ENCODE measurements at regions of chr2 and their contacts with region 1.

Region 1: GRCh38 chr2:54773838-54774237 is 50.4 kb downstream of the EML6 start:
- H3K4me3 ChIP-seq: no peak overlapping the region
- H3K27ac ChIP-seq: no peak overlapping the region
- H3K4me1 ChIP-seq: no peaks in the 10 kb centered on the region
- CTCF ChIP-seq: no peak

Region 2: DNA sequence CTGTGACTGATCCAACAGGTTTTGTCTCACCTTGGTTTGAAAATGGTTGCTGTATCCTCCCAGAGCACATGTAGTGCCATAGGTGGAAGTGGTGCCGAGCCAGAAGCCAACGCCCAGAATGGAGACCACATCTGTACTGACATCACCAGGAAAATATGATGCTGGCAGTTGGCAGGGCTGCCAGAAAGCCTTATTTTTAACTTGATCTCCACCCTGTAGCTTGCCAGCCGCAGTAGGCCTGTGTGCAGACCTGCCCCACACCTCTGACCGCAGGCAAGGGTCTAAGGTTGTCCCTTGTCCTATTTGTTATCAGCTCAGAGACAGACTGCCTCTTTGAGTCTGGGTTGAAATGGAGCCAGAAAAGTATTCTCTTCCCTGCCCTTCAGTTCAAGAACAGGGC is 173.9 kb before region 1 on chr2:
- CTCF ChIA-PET with region 1: no interaction called
- POLR2A ChIA-PET with region 1: no interaction called
- H3K4me3 ChIP-seq: no peak overlapping the region
- H3K27ac ChIP-seq: no peak overlapping the region
- H3K4me1 ChIP-seq: no peaks in the 10 kb centered on the region
- CTCF ChIP-seq: no peak

Region 3: GRCh38 chr2:54763636-54764291 is 10.1 kb before region 1 on chr2:
- CTCF ChIA-PET with region 1: interaction called, 11 read pairs
- POLR2A ChIA-PET with region 1: no interaction called
- H3K4me3 ChIP-seq: no peak overlapping the region
- H3K27ac ChIP-seq: no peak overlapping the region
- H3K4me1 ChIP-seq: no peaks in the 10 kb centered on the region
- CTCF ChIP-seq: 0 out of 2 replicates have a peak, but pooled peaks have one; percentile 32

Region 4: DNA sequence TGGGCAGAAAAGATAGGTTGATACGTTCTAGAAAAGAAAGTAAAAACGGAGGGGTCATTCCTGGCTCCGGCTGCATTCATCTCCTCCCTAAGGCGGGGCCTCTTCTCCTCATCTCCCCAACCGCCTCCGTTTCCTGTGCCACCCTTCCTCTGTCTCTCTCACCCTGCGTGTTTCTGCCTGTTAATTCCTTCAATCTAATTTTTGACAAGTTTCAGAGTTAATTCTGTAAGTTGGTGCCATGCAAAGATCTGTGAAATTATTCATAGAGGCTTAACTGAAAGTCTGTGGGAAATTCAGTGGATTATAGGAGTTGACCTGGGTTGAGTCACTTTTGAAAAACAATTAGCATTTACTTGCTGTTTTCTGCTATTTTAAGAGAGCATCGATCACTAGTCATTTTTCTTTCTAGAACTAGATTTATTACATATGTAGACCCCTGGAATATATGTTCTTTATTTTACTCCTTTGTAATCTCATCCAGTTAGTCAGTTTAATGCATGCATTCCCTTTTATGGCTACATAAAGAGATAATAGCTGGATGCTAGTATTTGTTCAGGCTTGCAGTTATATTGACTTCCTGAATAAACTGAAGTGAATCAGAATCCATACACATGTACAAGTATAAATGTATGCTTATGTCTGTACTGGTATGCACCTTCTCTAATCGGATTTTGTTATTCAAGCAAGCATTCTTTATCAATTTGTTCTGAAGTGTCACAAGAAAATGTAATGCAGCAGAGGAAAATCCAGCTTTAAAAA is 40.7 kb after region 1 on chr2:
- CTCF ChIA-PET with region 1: no interaction called
- POLR2A ChIA-PET with region 1: no interaction called
- H3K4me3 ChIP-seq: no peak overlapping the region
- H3K27ac ChIP-seq: no peak overlapping the region
- H3K4me1 ChIP-seq: no peaks in the 10 kb centered on the region
- CTCF ChIP-seq: no peak

Region 5: DNA sequence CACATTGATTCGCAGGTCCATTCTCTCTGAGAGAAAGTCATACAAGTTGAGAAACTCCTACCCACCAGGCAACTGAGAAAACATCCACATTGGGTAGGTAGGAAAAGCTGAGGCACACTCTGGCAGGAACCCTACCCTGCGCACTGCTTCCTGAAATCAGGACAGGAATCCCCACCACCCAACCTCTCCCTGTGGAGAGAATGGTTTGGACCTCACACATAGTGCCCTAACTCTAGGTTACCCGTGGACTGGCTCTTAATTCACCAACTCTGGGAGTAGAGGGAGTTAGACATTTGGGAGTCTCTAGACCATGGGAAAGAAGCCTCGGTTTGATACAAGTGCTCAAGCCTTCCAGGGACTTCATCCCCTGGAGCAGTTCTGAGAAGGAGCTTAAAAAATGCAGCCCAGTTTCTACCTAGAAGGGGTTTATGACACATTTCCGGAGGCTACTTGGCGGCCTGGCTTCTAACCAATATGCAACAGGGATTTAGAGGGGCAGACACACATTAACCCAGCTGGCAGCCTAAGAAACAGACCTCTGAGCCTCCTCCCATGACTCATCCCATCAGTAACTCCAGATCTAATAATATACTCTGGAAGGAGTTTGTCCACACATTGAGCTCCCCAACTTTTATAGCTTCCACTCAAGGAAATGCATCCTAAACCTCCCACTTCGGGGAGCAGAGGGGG is 86.3 kb after region 1 on chr2:
- CTCF ChIA-PET with region 1: no interaction called
- POLR2A ChIA-PET with region 1: no interaction called
- H3K4me3 ChIP-seq: no peak overlapping the region
- H3K27ac ChIP-seq: no peak overlapping the region
- H3K4me1 ChIP-seq: no peaks in the 10 kb centered on the region
- CTCF ChIP-seq: no peak

Measured in HEK293 (cell line).